Endothelial cell of umbilical vein (primary cell): ENCODE measurements at regions of chr4 and their contacts with region 1.

Region 1: DNA sequence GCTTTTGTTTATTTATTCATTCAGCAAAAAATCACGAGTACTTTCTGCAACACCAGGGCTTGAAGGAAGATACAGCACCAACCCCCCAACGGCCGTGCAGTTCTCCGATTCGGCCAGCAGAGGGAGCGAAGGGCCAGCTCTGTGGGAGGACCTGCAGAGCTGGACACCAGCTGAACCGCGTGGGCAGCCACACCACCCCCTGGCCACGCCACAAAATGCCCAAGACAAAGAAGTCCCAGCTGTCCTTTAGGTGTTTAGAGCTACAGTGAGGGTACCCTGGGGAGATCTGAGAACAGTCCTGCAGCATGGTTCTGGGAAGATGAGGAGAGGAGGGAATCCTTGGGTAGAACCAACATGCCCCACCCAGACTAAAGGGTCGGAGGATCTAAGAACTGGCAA is 83.1 kb downstream of the RELL1 start:
- DNase-seq: peak; percentile 77
- H3K4me3 ChIP-seq: no peak overlapping the region
- H3K27ac ChIP-seq: no peak overlapping the region
- H3K4me1 ChIP-seq: peaks cover 13% of the 10 kb centered on the region
- H3K27me3 ChIP-seq: no peaks in the 10 kb centered on the region
- CTCF ChIP-seq: peak; percentile 94 to 96
- POLR2A ChIP-seq: no peak

Region 2: GRCh38 chr4:37615059-37615719 is 12.1 kb after region 1 on chr4:
- CTCF ChIA-PET with region 1: interaction called, 17 read pairs
- POLR2A ChIA-PET with region 1: no interaction called
- dilution Hi-C with region 1: no loop called
- intact Hi-C with region 1: no loop called
- DNase-seq: no peak
- H3K4me3 ChIP-seq: no peak overlapping the region
- H3K27ac ChIP-seq: no peak overlapping the region
- H3K4me1 ChIP-seq: no peaks in the 10 kb centered on the region
- H3K27me3 ChIP-seq: no peaks in the 10 kb centered on the region
- CTCF ChIP-seq: no peak
- POLR2A ChIP-seq: no peak

Region 3: DNA sequence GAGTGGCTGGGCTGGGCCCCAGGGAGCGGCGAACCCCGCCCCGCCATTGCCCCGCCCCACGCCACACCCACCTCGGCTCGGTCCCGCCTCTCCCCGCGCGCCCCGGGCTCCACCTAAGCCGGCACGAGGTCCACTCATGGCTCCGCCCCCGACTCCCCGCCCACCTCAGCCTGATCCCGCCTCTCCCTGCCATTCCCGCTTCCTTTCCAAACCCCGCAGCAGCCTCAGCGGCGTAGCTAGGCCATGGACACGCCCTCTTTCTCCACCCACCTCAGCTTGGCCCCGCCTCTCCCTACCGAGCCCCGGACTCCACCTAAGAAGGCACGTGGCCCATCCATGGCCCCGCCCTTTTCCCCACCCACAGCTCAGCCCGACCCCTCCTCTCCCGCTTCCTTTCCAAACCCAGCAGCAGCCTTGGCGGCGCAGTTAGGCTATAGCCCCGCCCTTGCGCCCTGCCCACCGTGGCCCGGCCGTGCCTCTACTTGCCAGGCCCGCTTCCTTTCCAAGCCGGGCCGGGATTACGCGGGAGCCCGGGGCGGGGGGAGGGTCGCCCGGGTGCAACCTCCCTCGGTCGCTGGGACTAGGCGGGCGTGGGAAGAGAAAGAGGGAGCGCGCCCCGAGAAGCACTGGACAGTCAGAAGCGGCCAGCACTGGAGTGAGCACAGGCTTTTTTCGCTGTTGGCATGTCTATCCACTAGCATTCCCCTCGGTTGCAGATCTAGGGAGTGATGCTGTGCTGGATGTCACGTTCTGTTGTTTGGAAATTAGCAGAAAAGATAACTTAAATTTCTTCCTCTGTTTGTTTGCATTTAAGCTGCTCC is 83.5 kb after region 1 on chr4 and contains the start of gene RELL1:
- CTCF ChIA-PET with region 1: interaction called, 38 read pairs
- POLR2A ChIA-PET with region 1: interaction called, 7 read pairs
- dilution Hi-C with region 1: no loop called
- intact Hi-C with region 1: loop called (anchors 1 kb)
- DNase-seq: peak; percentile 100
- H3K4me3 ChIP-seq: peak within 1 kb of the TSS; percentile 68 to 95 (median 86)
- H3K27ac ChIP-seq: peak within 1 kb of the TSS; percentile 79
- H3K4me1 ChIP-seq: peaks cover 24% of the 10 kb centered on the region
- H3K27me3 ChIP-seq: no peaks in the 10 kb centered on the region
- CTCF ChIP-seq: no peak
- POLR2A ChIP-seq: no peak
- total RNA-seq, gene RELL1: 87.1 and 91.7 TPM in 2 replicates

Region 4: DNA sequence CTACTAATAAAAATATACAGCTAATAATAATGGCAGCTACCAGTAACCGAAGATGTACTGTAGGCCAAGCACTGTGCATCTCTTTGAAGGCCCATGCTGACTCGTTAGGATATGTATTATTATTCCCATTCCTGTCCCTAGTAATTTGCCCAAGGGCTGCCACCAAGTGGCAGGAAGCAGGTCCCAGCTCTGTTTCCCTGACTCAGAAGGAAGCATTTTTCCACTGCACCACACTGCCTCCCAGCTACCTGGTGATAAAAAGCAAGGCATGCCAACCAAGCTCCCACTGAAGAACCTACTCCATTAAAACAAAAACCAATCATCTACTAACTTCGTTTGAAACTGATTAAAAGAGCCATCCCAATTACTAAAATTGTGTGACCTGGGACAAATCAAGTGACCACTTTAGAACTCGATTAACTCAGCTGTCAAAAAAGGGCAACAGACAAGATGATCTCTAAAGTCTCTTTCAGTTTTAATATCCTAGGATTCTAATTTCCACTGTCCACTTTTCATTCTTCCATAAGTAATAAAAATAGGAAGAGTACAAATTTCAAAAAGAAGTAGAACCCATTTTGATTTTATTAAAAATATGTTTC is 199.1 kb after region 1 on chr4:
- CTCF ChIA-PET with region 1: interaction called, 109 read pairs
- POLR2A ChIA-PET with region 1: no interaction called
- dilution Hi-C with region 1: no loop called
- intact Hi-C with region 1: loop called (anchors 1 kb)
- DNase-seq: peak; percentile 73
- H3K4me3 ChIP-seq: no peak overlapping the region
- H3K27ac ChIP-seq: no peak overlapping the region
- H3K4me1 ChIP-seq: no peaks in the 10 kb centered on the region
- H3K27me3 ChIP-seq: peaks cover 0 to 3% of the 10 kb centered on the region in 2 experiments
- CTCF ChIP-seq: peak; percentile 42 to 51
- POLR2A ChIP-seq: no peak

Region 5: DNA sequence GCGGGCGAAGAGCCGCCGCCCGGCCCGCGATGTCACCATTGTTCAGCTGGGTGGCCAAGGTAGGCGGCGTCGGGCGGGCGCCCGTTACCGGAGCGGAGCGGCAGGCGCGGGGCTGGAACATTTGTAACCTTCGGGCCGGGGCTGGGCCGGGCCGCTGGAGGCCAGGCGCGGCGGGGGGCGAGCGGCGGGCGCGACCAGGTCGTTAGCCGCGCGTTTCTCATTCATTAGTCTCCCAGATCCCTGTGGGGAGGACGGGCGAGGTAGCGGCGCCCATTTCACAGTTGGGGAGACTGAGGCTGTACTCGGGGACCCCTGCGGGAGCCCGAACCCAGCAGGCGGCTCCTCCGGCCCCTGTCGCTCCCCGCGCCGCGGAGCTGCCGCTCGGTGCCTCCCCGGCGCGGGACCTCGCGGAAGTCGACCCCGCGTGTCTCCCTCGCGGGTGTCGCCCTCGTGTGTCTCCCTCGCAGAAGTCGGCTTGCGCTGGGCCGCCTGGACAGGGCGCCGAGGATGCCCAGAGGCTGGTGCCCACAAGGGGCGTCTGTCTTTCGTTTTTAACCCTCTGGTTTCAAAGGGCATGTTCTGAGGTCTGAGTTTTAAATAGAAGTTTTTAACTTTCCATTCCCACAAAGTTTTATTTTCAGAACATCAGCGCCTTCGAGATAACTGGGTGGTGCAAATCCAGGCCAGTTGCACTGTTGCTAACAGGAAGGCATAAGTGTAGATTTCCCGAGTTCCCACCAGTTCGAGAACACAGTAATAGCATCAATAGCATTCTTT is 374.6 kb after region 1 on chr4:
- CTCF ChIA-PET with region 1: no interaction called
- POLR2A ChIA-PET with region 1: no interaction called
- dilution Hi-C with region 1: no loop called
- intact Hi-C with region 1: loop called (anchors 1 kb)
- DNase-seq: peak; percentile 69
- H3K4me3 ChIP-seq: peak overlapping the region; percentile 21 to 77 (median 74)
- H3K27ac ChIP-seq: peak overlapping the region; percentile 83
- H3K4me1 ChIP-seq: peaks cover 13% of the 10 kb centered on the region
- H3K27me3 ChIP-seq: no peaks in the 10 kb centered on the region
- CTCF ChIP-seq: peak; percentile 52 to 82
- POLR2A ChIP-seq: no peak